ENCODE measurements at regions of chr7 and their contacts with region 1.

Region 1: DNA sequence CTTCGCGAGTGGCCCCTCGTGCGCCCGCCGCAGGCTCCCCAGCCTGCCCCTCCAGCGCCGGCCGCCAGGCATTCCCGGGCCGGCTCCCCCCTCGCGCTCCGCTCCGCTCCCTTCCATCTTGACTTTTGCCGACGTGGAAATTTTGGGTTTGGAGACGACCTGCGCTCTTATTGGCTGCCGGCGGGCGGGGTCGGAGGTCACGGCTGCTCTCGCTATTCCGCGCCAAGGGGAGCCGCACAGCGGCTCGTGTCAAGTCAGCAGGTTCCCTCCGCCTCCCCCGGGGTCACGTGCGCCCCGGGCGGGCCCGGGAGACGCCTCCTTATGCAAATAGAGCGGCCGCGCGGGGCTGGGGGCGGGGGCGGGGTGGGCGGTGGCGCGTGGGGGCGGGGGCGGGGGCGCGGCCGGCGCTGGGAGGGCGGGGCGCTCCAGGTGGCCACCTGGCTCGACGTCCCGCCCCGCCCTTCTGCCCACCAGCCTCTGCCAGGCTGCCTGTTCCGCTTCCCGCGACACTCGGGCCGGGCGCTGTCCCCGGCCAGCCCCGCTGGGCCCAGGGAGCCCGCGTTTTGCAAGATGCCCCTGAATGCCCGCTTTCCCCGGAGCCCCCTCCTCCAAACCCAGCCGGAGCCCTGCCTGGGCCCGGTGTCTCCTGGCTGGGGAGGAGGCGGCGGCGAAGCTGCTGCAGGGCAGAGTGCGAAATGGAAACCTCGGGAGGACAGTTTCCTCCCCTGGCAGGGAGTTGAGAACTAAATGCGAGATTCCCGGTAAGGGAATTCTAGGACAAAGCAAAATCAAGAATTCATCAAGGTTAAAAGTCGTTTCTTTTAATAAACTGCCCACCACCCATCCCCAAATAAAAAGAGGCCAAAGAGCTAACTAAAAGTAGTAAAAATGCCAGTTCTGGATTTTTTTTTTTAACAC is 200.7 kb upstream of the NFE2L3 start:
- DNase-seq: peak; percentile 70 to 93 (median 87)
- ATAC-seq: peak; percentile 97
- H3K4me3 ChIP-seq: peak overlapping the region; percentile 54 to 65
- H3K4me3 Mint-ChIP-seq: peak overlapping the region; percentile 90
- H3K27ac ChIP-seq: peak overlapping the region in 1 of 2 experiments; percentile 27
- H3K27ac Mint-ChIP-seq: peak overlapping the region; percentile 76
- H3K4me1 ChIP-seq: peaks cover 18% of the 10 kb centered on the region
- H3K4me1 Mint-ChIP-seq: peaks cover 22% of the 10 kb centered on the region
- H3K27me3 ChIP-seq: no peaks in the 10 kb centered on the region
- H3K27me3 Mint-ChIP-seq: peaks cover 2% of the 10 kb centered on the region
- CTCF ChIP-seq: no peak

Region 2: DNA sequence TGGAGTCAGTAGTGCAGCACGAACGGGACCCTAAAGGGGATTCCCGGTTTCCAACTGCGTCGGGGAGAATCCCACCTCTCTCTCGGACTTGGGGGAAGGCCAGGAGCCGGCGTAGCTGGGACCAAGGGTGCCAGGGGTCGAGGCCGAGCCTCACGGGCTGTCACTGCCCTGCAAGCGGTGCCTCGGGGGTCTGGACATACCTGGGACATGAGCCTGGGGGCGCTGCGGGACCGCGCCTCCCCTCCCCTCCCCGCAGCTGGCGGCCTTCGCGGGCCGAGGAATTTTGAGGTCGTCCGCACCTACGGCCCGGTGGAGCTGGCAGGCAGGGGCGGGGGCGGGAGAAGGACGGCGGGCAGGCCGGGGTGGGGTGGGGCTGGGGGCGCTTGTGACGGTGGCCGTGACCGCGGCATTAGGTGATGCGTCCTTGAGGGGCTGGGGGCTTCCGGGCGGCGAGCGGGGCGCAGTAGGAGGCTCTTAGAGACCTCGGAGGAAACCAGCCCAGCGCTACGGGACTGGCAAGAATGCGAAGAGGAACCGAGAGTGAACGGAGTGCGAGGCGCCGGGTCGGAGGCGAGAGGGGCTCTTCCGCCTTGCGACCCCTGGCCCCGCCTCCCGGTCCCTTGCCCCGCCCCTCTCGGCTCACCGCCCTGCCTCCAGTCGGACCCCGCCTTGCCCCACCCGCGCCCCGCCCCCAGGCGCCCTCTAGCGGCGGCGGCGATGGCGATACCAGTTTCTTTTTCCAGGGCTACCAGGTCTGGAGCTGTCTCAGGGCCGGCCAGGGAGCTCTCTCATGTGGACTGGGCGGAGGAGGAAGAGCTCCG is 771.3 kb before region 1 on chr7:
- CTCF ChIA-PET with region 1: no interaction called
- POLR2A ChIA-PET with region 1: no interaction called
- intact Hi-C with region 1: loop called in 1 of 2 experiments (anchors 10 kb)
- DNase-seq: peak; percentile 92 to 99 (median 95)
- ATAC-seq: peak; percentile 98
- H3K4me3 ChIP-seq: peak overlapping the region; percentile 64 to 70
- H3K4me3 Mint-ChIP-seq: peak overlapping the region; percentile 91
- H3K27ac ChIP-seq: peak overlapping the region; percentile 57 to 83
- H3K27ac Mint-ChIP-seq: peak overlapping the region; percentile 92
- H3K4me1 ChIP-seq: peaks cover 7% of the 10 kb centered on the region
- H3K4me1 Mint-ChIP-seq: peaks cover 22% of the 10 kb centered on the region
- H3K27me3 ChIP-seq: no peaks in the 10 kb centered on the region
- H3K27me3 Mint-ChIP-seq: peaks cover under 1% of the 10 kb centered on the region
- CTCF ChIP-seq: peak; percentile 91

Region 3: GRCh38 chr7:26291699-26292538 is 340.6 kb after region 1 on chr7 and contains the start of gene SNX10:
- CTCF ChIA-PET with region 1: no interaction called
- POLR2A ChIA-PET with region 1: no interaction called
- intact Hi-C with region 1: loop called (anchors 2 to 5 kb)
- DNase-seq: peak; percentile 45 to 91 (median 72)
- ATAC-seq: peak; percentile 79
- H3K4me3 ChIP-seq: peak within 1 kb of the TSS; percentile 70 to 94
- H3K4me3 Mint-ChIP-seq: peak within 1 kb of the TSS; percentile 91
- H3K27ac ChIP-seq: peak within 1 kb of the TSS; percentile 43 to 78
- H3K27ac Mint-ChIP-seq: peak within 1 kb of the TSS; percentile 85
- H3K4me1 ChIP-seq: peaks cover 32% of the 10 kb centered on the region
- H3K4me1 Mint-ChIP-seq: peaks cover 38% of the 10 kb centered on the region
- H3K27me3 ChIP-seq: no peaks in the 10 kb centered on the region
- H3K27me3 Mint-ChIP-seq: no peaks in the 10 kb centered on the region
- CTCF ChIP-seq: no peak
- total RNA-seq, gene SNX10: 3.9 to 7.0 TPM